ENCODE measurements at regions of chr14 and their contacts with region 1.

Region 1: GRCh38 chr14:65958664-65959562 is 527.3 kb upstream of the CCDC196 start:
- DNase-seq: no peak
- ATAC-seq: peak in 7 of 8 donors; percentile 19 to 69 (median 33)
- H3K4me3 ChIP-seq: no peak overlapping the region
- H3K27ac ChIP-seq: no peak overlapping the region
- H3K4me1 ChIP-seq: peaks cover 0 to 6% (median 0%) of the 10 kb centered on the region in 9 donors
- H3K27me3 ChIP-seq: peaks cover 0 to 14% (median 0%) of the 10 kb centered on the region in 7 donors
- CTCF ChIP-seq: peak; percentile 19 to 68 (median 56)

Region 2: DNA sequence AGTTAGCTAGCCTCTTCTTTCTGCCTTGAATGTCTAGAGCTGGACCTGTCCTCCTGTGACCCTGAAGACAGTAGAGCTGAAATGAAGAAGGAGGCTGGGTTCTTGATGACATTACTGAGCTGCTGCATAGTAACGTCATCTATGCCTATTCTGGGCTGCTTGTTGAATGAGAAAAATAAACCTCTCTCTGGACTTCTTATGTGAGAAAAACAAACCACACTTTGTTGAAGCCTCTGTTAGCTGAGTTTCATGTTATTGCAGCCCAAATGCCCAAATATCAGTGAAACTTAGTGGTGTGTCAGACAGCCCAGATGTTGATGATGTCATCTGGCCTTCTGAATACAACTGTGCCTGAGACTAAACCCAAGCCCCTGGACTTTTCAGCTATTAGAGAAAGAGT is 789.6 kb before region 1 on chr14:
- intact Hi-C with region 1: loop called in 9 of 10 experiments (anchors 2 to 10 kb)
- DNase-seq: peak in 1 of 2 donors; percentile 10
- ATAC-seq: peak in 7 of 8 donors; percentile 54 to 85 (median 71)
- H3K4me3 ChIP-seq: no peak overlapping the region
- H3K27ac ChIP-seq: peak overlapping the region in 6 of 10 donors; percentile 17 to 58 (median 47)
- H3K4me1 ChIP-seq: peaks cover 0 to 25% (median 7%) of the 10 kb centered on the region in 9 donors
- H3K27me3 ChIP-seq: peaks cover 0 to 24% (median 12%) of the 10 kb centered on the region in 7 donors
- CTCF ChIP-seq: no peak

Region 3: GRCh38 chr14:65813760-65814384 is 145.0 kb before region 1 on chr14:
- intact Hi-C with region 1: no loop called
- DNase-seq: no peak
- ATAC-seq: no peak
- H3K4me3 ChIP-seq: no peak overlapping the region
- H3K27ac ChIP-seq: no peak overlapping the region
- H3K4me1 ChIP-seq: no peaks in the 10 kb centered on the region
- H3K27me3 ChIP-seq: peaks cover 0 to 17% (median 5%) of the 10 kb centered on the region in 7 donors
- CTCF ChIP-seq: no peak

Region 4: DNA sequence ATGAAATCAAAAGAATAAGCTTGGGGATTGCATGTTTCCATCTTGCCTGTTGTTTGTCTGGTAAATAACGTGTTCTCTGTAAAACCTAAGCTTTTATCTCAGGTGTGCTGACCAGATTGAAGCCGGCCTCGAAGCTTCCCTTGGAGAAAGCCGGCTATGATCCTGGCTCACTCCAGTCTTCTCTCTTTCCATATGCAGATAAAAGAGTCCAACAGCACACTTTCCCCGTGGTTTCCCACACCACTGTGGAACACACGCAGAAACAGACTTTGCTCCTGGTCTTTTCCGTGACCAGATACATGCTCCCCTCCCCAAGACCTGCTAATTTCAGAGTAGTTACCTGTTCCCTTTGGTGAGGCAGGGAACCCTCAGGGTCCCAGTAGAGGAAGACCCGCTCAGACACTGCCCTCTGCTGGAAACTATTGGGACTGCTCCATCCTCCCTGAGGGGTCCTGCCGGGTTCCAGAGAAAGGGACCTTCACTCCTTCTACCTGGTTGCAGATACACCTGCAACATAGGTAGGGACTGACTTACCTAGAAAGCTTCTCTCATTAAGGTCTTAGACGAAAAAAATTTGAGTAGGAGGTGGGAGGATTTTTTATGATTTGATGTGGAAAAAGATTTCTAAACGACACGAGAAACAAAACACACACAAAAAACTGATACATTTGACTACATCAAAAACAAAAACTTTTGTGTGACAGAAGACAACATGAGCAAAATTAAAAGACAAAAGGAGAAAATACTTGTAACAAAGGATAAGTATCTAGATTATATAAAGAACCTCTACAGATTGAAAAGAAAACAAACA is 111.8 kb after region 1 on chr14:
- intact Hi-C with region 1: loop called in 7 of 10 experiments (anchors 1 to 5 kb)
- DNase-seq: peak; percentile 23 to 30
- ATAC-seq: peak in 4 of 8 donors; percentile 28 to 63 (median 51)
- H3K4me3 ChIP-seq: no peak overlapping the region
- H3K27ac ChIP-seq: no peak overlapping the region
- H3K4me1 ChIP-seq: no peaks in the 10 kb centered on the region
- H3K27me3 ChIP-seq: peaks cover 0 to 15% (median 4%) of the 10 kb centered on the region in 7 donors
- CTCF ChIP-seq: peak; percentile 42 to 88 (median 77)

Measured in heart right ventricle (tissue), 16 donors.